ENCODE measurements at regions of chr5 and their contacts with region 1.

Region 1: DNA sequence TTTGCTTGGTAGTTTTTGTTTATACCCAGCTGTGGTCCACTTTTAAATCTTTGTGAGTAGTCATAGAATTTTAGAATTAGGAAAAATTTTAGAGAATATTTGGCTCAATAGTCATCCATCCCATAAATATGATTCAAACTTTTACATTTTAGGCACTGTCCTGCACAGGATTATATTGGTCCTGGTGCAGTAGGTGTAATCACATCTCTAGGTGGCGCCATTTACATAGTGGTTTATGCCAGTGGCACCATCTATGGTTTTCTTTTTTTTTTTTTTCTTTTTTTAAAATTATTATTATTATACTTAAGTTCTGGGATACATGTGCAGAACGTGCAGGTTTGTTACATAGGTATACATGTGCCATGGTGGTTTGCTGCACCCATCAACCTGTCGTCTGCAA is 260.7 kb upstream of the KCNN2 start:
- DNase-seq: no peak
- ATAC-seq: peak; percentile 86
- H3K4me3 ChIP-seq: no peak overlapping the region
- H3K27ac ChIP-seq: no peak overlapping the region
- H3K4me1 ChIP-seq: no peaks in the 10 kb centered on the region
- H3K27me3 ChIP-seq: no peaks in the 10 kb centered on the region
- CTCF ChIP-seq: peak; percentile 42 to 54 (median 47); a peak in 5 of 6 replicates
- EP300 ChIP-seq: no peak
- POLR2A ChIP-seq: no peak
- RAD21 ChIP-seq: peak; percentile 70

Region 2: DNA sequence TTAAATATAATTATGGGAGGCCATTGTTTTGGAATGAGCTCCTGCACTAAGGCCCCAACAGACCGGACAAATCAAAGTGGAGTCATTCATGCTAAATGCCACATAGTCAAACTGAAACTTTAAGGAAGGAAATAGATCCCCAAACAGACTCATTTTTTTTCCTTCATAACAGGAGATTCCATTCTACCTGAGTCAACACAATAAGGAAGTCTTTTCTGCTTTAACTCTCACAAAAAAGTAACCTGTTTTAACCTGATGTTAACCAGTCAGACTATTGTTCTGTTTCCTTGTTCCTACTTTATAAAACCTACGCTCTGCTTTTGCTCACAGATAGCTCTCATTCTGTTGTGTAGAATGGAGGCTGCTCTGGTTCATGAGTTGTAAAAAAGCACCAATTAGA is 352.8 kb before region 1 on chr5:
- CTCF ChIA-PET with region 1: no interaction called
- POLR2A ChIA-PET with region 1: no interaction called
- RAD21 ChIA-PET with region 1: no interaction called
- SMC1A ChIA-PET with region 1: no interaction called
- in situ Hi-C with region 1: no loop called
- intact Hi-C with region 1: no loop called
- DNase-seq: no peak
- ATAC-seq: no peak
- H3K4me3 ChIP-seq: no peak overlapping the region
- H3K27ac ChIP-seq: no peak overlapping the region
- H3K4me1 ChIP-seq: no peaks in the 10 kb centered on the region
- H3K27me3 ChIP-seq: no peaks in the 10 kb centered on the region
- CTCF ChIP-seq: no peak
- EP300 ChIP-seq: no peak
- POLR2A ChIP-seq: no peak
- RAD21 ChIP-seq: no peak

Region 3: GRCh38 chr5:114148253-114148652 is 47.1 kb after region 1 on chr5:
- CTCF ChIA-PET with region 1: no interaction called
- POLR2A ChIA-PET with region 1: no interaction called
- RAD21 ChIA-PET with region 1: no interaction called
- SMC1A ChIA-PET with region 1: no interaction called
- in situ Hi-C with region 1: no loop called
- intact Hi-C with region 1: no loop called
- DNase-seq: no peak
- ATAC-seq: no peak
- H3K4me3 ChIP-seq: no peak overlapping the region
- H3K27ac ChIP-seq: no peak overlapping the region
- H3K4me1 ChIP-seq: no peaks in the 10 kb centered on the region
- H3K27me3 ChIP-seq: no peaks in the 10 kb centered on the region
- CTCF ChIP-seq: no peak
- EP300 ChIP-seq: no peak
- POLR2A ChIP-seq: no peak
- RAD21 ChIP-seq: no peak

Region 4: GRCh38 chr5:114305402-114306211 is 204.5 kb after region 1 on chr5:
- CTCF ChIA-PET with region 1: interaction called, 3 read pairs
- POLR2A ChIA-PET with region 1: no interaction called
- RAD21 ChIA-PET with region 1: no interaction called
- SMC1A ChIA-PET with region 1: no interaction called
- in situ Hi-C with region 1: no loop called
- intact Hi-C with region 1: loop called (anchors 5 kb)
- DNase-seq: no peak
- ATAC-seq: peak; percentile 87
- H3K4me3 ChIP-seq: no peak overlapping the region
- H3K27ac ChIP-seq: no peak overlapping the region
- H3K4me1 ChIP-seq: no peaks in the 10 kb centered on the region
- H3K27me3 ChIP-seq: no peaks in the 10 kb centered on the region; a peak in 1 of 4 replicates
- CTCF ChIP-seq: peak; percentile 38 to 50 (median 43); a peak in 4 of 6 replicates
- EP300 ChIP-seq: no peak
- POLR2A ChIP-seq: no peak
- RAD21 ChIP-seq: peak; percentile 51

Region 5: GRCh38 chr5:114789773-114790402 is 688.7 kb after region 1 on chr5:
- CTCF ChIA-PET with region 1: interaction called, 6 read pairs
- POLR2A ChIA-PET with region 1: no interaction called
- RAD21 ChIA-PET with region 1: no interaction called
- SMC1A ChIA-PET with region 1: no interaction called
- in situ Hi-C with region 1: no loop called
- intact Hi-C with region 1: loop called (anchors 2 kb)
- DNase-seq: no peak
- ATAC-seq: peak; percentile 83
- H3K4me3 ChIP-seq: no peak overlapping the region
- H3K27ac ChIP-seq: no peak overlapping the region
- H3K4me1 ChIP-seq: no peaks in the 10 kb centered on the region
- H3K27me3 ChIP-seq: no peaks in the 10 kb centered on the region; a peak in 1 of 4 replicates
- CTCF ChIP-seq: peak; percentile 28 to 64 (median 53); a peak in 5 of 6 replicates
- EP300 ChIP-seq: no peak
- POLR2A ChIP-seq: no peak
- RAD21 ChIP-seq: peak; percentile 60